ENCODE measurements at regions of chr2 and their contacts with region 1.

Region 1: DNA sequence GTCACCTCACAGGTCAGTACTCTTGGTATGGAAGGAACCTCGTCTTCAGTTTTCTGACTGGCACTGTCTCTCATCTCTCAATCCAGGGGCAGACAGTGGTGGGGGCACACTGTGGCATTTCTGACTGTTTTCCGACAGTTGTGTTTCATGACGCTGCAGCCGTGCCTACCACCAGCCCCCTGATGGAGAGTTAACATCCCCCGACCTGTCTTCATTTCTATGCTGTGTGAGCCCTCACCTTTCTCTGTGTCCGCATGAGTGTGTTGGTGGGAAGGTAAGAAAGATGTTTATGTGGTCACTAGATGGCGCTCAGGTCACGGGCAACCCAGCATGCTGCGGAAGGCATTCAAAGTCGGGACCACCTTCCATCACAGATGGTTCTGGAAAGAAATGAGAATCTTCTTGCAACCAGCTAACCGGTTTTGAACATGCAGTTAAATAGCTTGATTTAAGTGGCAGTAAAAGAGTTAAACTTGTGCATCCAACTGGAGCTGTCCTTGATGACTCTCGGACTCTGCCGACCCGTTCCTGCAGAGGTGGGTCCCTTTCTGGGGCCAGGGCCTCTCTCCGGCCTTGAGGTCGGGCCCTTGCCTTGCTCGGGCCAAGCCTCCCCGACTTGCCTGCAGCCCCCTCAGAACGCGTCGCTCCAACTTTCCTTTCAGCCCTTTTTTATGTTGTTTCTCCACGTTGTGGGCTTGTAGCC is 92.4 kb downstream of the DYSF start:
- DNase-seq: peak in 7 of 9 experiments; percentile 21 to 73 (median 45)
- ATAC-seq: no peak
- H3K4me3 ChIP-seq: peak overlapping the region; percentile 31 to 33
- H3K4me3 Mint-ChIP-seq: peak overlapping the region; percentile 74
- H3K27ac ChIP-seq: no peak overlapping the region
- H3K27ac Mint-ChIP-seq: no peak overlapping the region
- H3K4me1 ChIP-seq: no peaks in the 10 kb centered on the region
- H3K4me1 Mint-ChIP-seq: peaks cover 10% of the 10 kb centered on the region
- H3K27me3 ChIP-seq: no peaks in the 10 kb centered on the region
- H3K27me3 Mint-ChIP-seq: peaks cover 11% of the 10 kb centered on the region
- CTCF ChIP-seq: peak; percentile 61

Region 2: DNA sequence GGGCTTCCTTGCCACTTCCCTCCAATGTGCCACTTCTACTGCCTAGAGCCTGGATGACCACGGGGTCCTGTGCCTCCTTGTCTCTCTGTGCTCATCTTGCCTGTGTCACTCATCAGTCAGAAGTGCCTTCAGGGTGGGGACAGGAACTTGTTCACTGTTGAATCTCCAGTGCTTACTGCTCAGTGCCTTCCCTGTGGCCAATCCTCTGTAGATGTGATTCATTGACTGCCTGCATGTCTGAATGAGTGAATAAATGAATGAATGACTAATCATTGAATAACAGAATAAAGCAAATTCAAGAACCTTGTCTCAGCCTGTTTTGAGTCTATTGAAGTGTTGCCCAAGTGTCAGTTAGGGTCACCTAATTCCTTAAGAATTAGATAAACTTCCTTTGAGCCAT is 1201.5 kb before region 1 on chr2:
- CTCF ChIA-PET with region 1: no interaction called
- POLR2A ChIA-PET with region 1: no interaction called
- intact Hi-C with region 1: no loop called
- DNase-seq: no peak
- ATAC-seq: no peak
- H3K4me3 ChIP-seq: no peak overlapping the region
- H3K4me3 Mint-ChIP-seq: no peak overlapping the region
- H3K27ac ChIP-seq: no peak overlapping the region
- H3K27ac Mint-ChIP-seq: no peak overlapping the region
- H3K4me1 ChIP-seq: no peaks in the 10 kb centered on the region
- H3K4me1 Mint-ChIP-seq: no peaks in the 10 kb centered on the region
- H3K27me3 ChIP-seq: no peaks in the 10 kb centered on the region
- H3K27me3 Mint-ChIP-seq: peaks cover 14% of the 10 kb centered on the region
- CTCF ChIP-seq: no peak

Region 3: DNA sequence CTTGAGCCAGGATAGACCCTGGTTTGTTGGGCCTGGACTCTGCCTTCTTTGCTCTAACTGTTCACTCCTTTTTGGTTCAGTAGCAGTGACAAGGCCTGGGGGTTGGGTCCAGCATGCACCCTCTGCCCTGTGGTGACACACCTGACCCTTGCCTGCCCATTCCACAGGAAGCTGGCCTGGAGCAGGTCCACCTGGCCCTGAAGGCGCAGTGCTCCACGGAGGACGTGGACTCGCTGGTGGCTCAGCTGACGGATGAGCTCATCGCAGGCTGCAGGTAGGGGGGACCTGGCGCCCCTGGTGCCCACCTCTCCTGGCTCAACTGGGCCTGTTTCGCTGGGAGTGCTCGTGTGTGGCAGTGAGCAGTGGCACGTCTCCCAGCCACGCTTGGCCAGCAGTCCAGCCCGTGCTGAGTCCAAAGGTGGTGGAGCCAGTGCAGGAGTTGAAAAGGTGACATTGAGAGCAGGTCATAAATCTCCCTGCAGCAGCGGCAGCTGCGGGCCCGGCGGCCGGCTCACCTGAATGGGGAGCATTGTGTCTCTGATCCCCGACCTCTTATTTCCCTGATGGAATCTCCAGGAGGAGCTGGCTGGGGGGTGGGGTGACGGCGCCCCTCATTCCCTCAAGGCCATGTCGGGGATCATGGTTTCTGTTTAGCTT is 10.2 kb after region 1 on chr2:
- CTCF ChIA-PET with region 1: interaction called, 24 read pairs
- POLR2A ChIA-PET with region 1: no interaction called
- intact Hi-C with region 1: no loop called
- DNase-seq: no peak
- ATAC-seq: no peak
- H3K4me3 ChIP-seq: no peak overlapping the region
- H3K4me3 Mint-ChIP-seq: no peak overlapping the region
- H3K27ac ChIP-seq: no peak overlapping the region
- H3K27ac Mint-ChIP-seq: no peak overlapping the region
- H3K4me1 ChIP-seq: no peaks in the 10 kb centered on the region
- H3K4me1 Mint-ChIP-seq: no peaks in the 10 kb centered on the region
- H3K27me3 ChIP-seq: no peaks in the 10 kb centered on the region
- H3K27me3 Mint-ChIP-seq: no peaks in the 10 kb centered on the region
- CTCF ChIP-seq: no peak

Region 4: GRCh38 chr2:72137498-72138010 is 591.8 kb after region 1 on chr2:
- CTCF ChIA-PET with region 1: no interaction called
- POLR2A ChIA-PET with region 1: no interaction called
- intact Hi-C with region 1: loop called in 1 of 2 experiments (anchors 5 kb)
- DNase-seq: peak; percentile 27 to 75 (median 54)
- ATAC-seq: peak; percentile 48
- H3K4me3 ChIP-seq: no peak overlapping the region
- H3K4me3 Mint-ChIP-seq: no peak overlapping the region
- H3K27ac ChIP-seq: no peak overlapping the region
- H3K27ac Mint-ChIP-seq: no peak overlapping the region
- H3K4me1 ChIP-seq: no peaks in the 10 kb centered on the region
- H3K4me1 Mint-ChIP-seq: peaks cover 1% of the 10 kb centered on the region
- H3K27me3 ChIP-seq: no peaks in the 10 kb centered on the region
- H3K27me3 Mint-ChIP-seq: peaks cover 14% of the 10 kb centered on the region
- CTCF ChIP-seq: peak; percentile 73

Region 5: GRCh38 chr2:72579591-72580180 is 1034.0 kb after region 1 on chr2:
- CTCF ChIA-PET with region 1: no interaction called
- POLR2A ChIA-PET with region 1: no interaction called
- intact Hi-C with region 1: loop called (anchors 1 to 5 kb)
- DNase-seq: peak in 2 of 9 experiments; percentile 20 to 35
- ATAC-seq: no peak
- H3K4me3 ChIP-seq: no peak overlapping the region
- H3K4me3 Mint-ChIP-seq: no peak overlapping the region
- H3K27ac ChIP-seq: no peak overlapping the region
- H3K27ac Mint-ChIP-seq: no peak overlapping the region
- H3K4me1 ChIP-seq: no peaks in the 10 kb centered on the region
- H3K4me1 Mint-ChIP-seq: peaks cover 6% of the 10 kb centered on the region
- H3K27me3 ChIP-seq: no peaks in the 10 kb centered on the region
- H3K27me3 Mint-ChIP-seq: no peaks in the 10 kb centered on the region
- CTCF ChIP-seq: peak; percentile 47

Region 6: DNA sequence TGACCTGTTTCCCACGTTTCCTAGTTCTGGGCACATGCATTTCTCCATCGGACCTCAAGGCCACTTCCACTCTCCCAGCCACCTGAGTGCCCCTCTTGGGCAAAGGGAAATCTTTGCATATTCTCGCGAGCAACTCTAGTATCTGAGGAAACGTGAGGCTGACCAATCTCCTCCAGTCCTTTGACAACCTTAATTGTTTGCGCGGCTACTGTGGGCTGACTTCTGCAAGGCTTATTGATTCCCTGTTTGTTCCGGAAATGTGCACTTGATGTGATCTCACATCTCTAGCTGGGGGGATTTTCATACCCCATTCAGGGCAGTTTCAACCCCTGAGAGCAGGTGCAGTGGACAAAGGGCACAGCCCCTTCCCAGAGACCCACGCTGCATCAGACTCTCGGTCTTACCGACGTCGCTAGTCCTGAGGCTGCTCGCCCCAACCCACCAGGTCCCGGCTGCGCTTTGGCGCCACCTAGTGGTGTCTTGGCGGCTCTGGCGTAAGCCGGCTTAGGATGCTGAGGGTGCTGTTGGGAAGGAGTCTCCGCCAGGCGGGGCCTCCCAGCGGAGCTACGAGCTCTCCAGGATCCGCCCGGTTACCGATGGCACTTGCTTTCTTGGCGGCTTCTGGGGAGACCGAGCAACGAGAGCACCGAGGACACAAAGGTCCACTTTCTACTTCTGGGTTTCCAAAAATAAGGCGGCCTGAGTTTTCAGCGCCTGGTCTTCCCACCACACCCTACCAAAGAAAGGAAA is 1316.7 kb after region 1 on chr2:
- CTCF ChIA-PET with region 1: no interaction called
- POLR2A ChIA-PET with region 1: no interaction called
- intact Hi-C with region 1: loop called (anchors 2 to 5 kb)
- DNase-seq: peak; percentile 69 to 91 (median 84)
- ATAC-seq: peak; percentile 94
- H3K4me3 ChIP-seq: peak overlapping the region; percentile 0 to 16
- H3K4me3 Mint-ChIP-seq: peak overlapping the region; percentile 48
- H3K27ac ChIP-seq: no peak overlapping the region
- H3K27ac Mint-ChIP-seq: no peak overlapping the region
- H3K4me1 ChIP-seq: peaks cover 5% of the 10 kb centered on the region
- H3K4me1 Mint-ChIP-seq: peaks cover 11% of the 10 kb centered on the region
- H3K27me3 ChIP-seq: peaks cover 8 to 13% of the 10 kb centered on the region in 2 experiments
- H3K27me3 Mint-ChIP-seq: peaks cover 54% of the 10 kb centered on the region
- CTCF ChIP-seq: peak; percentile 73

Measured in CD8-positive, alpha-beta T cell (primary cell).